Right lobe of liver (tissue), 6 donors: ENCODE measurements at regions of chr12 and their contacts with region 1.

Region 1: GRCh38 chr12:125683748-125684381 is 618.6 kb downstream of the AACS start:
- DNase-seq: peak; percentile 82 to 85 (median 83)
- ATAC-seq: peak; percentile 95 to 99 (median 96)
- H3K4me3 ChIP-seq: no peak overlapping the region
- H3K27ac ChIP-seq: no peak overlapping the region
- H3K4me1 ChIP-seq: no peaks in the 10 kb centered on the region
- H3K27me3 ChIP-seq: no peaks in the 10 kb centered on the region
- CTCF ChIP-seq: peak; percentile 77 to 96 (median 91)
- POLR2A ChIP-seq: no peak

Region 2: DNA sequence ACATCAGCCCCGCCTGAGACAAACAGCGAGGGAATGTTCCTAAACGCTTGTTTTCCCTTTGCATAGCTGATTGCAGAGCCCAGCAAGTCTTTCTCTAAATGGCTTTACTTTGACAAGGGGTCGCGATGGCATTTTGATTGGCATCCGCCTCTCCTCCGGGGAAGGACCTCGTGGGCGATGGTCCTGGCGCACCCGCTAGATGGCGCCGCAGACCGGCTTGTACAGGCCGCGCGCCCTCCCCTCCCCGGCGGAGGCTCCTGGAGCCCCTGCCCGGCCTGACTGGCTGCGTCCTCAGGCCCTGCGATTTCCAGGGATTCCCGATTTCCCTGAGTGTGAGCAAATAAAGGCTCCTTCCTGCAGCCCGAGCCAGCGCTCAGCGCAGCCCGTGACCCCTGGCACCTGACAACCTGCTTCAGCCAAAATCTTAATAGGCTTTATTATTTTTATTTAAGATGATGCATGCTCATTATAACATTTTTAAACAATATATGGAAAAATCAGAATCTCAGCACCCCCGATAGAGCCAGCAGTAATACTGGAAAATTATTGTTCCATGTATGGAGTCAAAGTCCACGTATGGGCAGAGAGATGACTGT is 150.3 kb before region 1 on chr12:
- intact Hi-C with region 1: loop called in 1 of 2 experiments (anchors 10 kb)
- DNase-seq: peak in 2 of 3 donors; percentile 53 to 58
- ATAC-seq: peak; percentile 83 to 88 (median 86)
- H3K4me3 ChIP-seq: no peak overlapping the region
- H3K27ac ChIP-seq: no peak overlapping the region
- H3K4me1 ChIP-seq: no peaks in the 10 kb centered on the region
- H3K27me3 ChIP-seq: no peaks in the 10 kb centered on the region
- CTCF ChIP-seq: peak; percentile 60 to 78 (median 72)
- POLR2A ChIP-seq: no peak

Region 3: DNA sequence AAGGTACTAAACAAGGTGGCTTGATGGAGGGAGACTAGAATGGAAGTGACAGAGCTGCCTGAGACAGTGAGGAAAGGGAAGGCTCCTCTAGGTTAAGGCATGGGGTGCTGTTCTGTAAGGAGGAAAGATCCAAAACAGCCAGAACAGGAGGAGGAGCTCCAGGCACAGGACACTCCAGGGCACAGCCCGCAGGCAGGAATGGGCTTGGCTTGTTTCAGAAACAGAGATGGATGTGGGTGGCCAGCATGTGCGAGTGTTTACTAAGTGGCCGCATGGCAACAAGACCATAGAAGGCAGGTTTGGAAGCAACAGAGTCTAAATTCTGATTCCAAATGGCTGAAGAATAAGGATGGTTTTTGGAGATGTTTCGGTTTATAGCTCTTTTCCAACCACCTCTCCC is 270.5 kb after region 1 on chr12:
- intact Hi-C with region 1: no loop called
- DNase-seq: no peak
- ATAC-seq: no peak
- H3K4me3 ChIP-seq: no peak overlapping the region
- H3K27ac ChIP-seq: no peak overlapping the region
- H3K4me1 ChIP-seq: no peaks in the 10 kb centered on the region
- H3K27me3 ChIP-seq: no peaks in the 10 kb centered on the region
- CTCF ChIP-seq: no peak
- POLR2A ChIP-seq: no peak